Mammary epithelial cell (primary cell): ENCODE measurements at regions of chr2 and their contacts with region 1.

Region 1: DNA sequence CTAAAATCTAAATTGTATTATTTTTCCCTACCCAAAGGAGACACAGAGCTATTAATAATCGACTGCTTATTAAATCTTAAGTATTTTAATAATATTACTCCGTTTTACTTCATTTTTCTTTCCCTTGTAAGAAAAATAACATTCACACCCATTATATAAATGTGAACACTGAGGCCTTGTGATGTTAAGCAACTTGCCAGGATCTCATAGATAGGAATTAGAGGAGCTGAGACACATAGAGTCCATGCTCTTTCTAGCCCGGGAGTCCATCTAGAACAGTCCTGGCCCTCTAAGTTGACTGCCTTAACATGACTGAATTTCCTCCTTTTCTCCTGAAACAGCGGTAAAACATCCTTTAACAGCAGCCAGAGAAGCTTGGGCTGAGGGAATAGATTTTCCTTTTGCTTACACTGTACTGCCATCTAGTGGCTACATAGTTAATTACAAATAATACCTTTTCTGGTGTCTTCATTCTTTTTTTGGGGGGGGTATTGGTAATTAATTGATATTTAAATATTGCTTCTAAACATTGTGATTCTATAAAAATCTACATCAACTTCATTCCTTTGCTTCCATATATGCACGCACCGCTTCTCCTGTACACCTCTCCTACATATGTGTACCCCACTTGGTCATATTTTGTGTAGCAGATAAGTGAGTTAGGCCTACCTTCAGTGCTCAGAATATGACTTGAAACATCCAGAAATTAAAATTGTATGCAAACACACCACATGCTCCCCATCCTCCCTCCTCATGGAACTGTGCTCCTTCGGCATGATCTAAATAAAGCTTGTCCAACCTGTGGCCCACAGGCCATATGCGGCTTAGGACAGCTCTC is 125.8 kb upstream of the HNMT start:
- DNase-seq: peak; percentile 29
- H3K4me3 ChIP-seq: no peak overlapping the region
- H3K27ac ChIP-seq: no peak overlapping the region
- H3K4me1 ChIP-seq: no peaks in the 10 kb centered on the region
- H3K27me3 ChIP-seq: no peaks in the 10 kb centered on the region
- CTCF ChIP-seq: peak; percentile 53 to 55

Region 2: DNA sequence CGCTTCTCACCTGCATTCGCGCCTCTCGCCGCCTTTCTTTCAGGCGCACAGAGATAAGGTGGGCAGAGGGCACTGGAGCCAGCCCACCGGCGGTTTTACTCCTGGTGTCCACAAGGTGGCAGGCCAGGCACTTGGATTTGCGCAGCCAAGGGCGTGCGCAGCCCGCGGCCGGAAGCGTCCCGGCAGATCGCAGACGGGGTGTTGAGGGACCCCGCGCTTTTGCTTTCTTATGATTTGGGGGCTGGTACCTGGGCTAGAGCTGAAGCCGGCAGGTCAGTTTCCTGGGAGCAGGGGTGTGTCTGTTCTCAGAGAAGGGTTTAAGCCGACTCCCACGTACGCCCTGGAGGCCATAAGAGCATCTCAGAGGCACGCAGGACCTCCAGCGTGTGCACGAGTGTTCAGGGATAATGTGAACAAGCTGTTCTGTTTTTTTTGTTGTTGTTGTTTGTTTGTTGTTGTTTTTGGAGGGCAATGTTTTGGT is 1414.9 kb before region 1 on chr2:
- CTCF ChIA-PET with region 1: no interaction called
- dilution Hi-C with region 1: no loop called
- in situ Hi-C with region 1: loop called (anchors 25 kb)
- intact Hi-C with region 1: loop called (anchors 1 kb)
- DNase-seq: peak; percentile 45
- H3K4me3 ChIP-seq: peak overlapping the region; percentile 34 to 46 (median 41)
- H3K27ac ChIP-seq: no peak overlapping the region
- H3K4me1 ChIP-seq: no peaks in the 10 kb centered on the region
- H3K27me3 ChIP-seq: peaks cover 3% of the 10 kb centered on the region
- CTCF ChIP-seq: peak; percentile 74 to 87

Region 3: GRCh38 chr2:136874258-136874657 is 964.2 kb before region 1 on chr2:
- CTCF ChIA-PET with region 1: no interaction called
- dilution Hi-C with region 1: no loop called
- in situ Hi-C with region 1: no loop called
- intact Hi-C with region 1: loop called (anchors 1 kb)
- DNase-seq: no peak
- H3K4me3 ChIP-seq: no peak overlapping the region
- H3K27ac ChIP-seq: no peak overlapping the region
- H3K4me1 ChIP-seq: no peaks in the 10 kb centered on the region
- H3K27me3 ChIP-seq: no peaks in the 10 kb centered on the region
- CTCF ChIP-seq: peak; percentile 35 to 54

Region 4: GRCh38 chr2:136932700-136933099 is 905.8 kb before region 1 on chr2:
- CTCF ChIA-PET with region 1: interaction called, 4 read pairs
- dilution Hi-C with region 1: no loop called
- in situ Hi-C with region 1: no loop called
- intact Hi-C with region 1: loop called (anchors 1 kb)
- DNase-seq: peak; percentile 14
- H3K4me3 ChIP-seq: no peak overlapping the region
- H3K27ac ChIP-seq: no peak overlapping the region
- H3K4me1 ChIP-seq: no peaks in the 10 kb centered on the region
- H3K27me3 ChIP-seq: no peaks in the 10 kb centered on the region
- CTCF ChIP-seq: peak; percentile 63 to 82

Region 5: DNA sequence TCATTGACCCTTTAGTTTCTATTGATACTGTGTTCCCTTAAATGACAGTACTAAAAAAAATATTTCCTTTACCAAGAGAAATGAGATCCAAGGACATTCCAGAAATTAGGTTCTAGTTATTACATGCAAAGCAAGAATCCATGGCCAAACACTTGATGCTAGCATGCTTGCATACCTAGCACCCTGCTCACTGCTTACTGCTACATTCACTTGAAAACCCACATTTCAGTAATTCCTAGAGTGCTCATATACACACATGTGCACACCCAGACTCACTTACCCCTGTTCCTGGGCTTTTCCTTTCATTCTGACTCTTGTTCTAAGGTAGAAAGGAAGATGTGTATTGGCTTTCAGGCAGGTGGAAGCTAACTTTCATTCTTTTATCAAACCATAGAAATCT is 677.2 kb before region 1 on chr2:
- CTCF ChIA-PET with region 1: no interaction called
- dilution Hi-C with region 1: no loop called
- in situ Hi-C with region 1: no loop called
- intact Hi-C with region 1: loop called (anchors 5 kb)
- DNase-seq: no peak
- H3K4me3 ChIP-seq: no peak overlapping the region
- H3K27ac ChIP-seq: no peak overlapping the region
- H3K4me1 ChIP-seq: peaks cover 7% of the 10 kb centered on the region
- H3K27me3 ChIP-seq: no peaks in the 10 kb centered on the region
- CTCF ChIP-seq: no peak

Region 6: DNA sequence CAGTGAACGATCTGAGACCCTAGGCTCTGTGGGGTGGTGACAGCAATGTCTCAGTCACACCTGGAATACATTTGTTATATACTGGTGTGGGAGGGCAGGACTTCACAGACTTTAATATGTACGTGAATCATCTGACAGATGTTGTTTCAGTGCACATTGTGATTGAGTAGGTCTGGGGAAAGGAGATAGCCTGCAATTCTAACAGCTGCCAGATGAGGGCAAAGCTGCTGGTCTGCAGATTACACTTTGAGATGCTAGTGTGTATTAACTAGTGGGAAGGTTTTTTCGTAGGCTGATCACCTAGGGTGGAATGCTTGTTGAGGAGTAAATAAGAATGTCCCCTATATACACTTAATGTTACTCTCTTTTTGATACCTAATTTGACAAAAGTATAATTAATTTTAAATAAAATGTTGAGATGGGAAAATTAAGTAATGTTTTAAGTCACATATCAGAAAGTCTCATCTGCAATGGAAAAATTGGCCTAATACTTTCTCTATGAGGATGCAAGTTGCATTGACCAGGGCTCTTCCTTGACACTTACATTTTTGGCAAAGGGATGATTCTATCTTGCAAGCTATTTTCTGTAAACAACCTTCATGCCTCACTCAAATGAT is 371.1 kb before region 1 on chr2:
- CTCF ChIA-PET with region 1: no interaction called
- dilution Hi-C with region 1: no loop called
- in situ Hi-C with region 1: no loop called
- intact Hi-C with region 1: loop called (anchors 1 kb)
- DNase-seq: peak; percentile 48
- H3K4me3 ChIP-seq: no peak overlapping the region
- H3K27ac ChIP-seq: no peak overlapping the region
- H3K4me1 ChIP-seq: no peaks in the 10 kb centered on the region
- H3K27me3 ChIP-seq: peaks cover 2% of the 10 kb centered on the region
- CTCF ChIP-seq: peak; percentile 77 to 87

Region 7: DNA sequence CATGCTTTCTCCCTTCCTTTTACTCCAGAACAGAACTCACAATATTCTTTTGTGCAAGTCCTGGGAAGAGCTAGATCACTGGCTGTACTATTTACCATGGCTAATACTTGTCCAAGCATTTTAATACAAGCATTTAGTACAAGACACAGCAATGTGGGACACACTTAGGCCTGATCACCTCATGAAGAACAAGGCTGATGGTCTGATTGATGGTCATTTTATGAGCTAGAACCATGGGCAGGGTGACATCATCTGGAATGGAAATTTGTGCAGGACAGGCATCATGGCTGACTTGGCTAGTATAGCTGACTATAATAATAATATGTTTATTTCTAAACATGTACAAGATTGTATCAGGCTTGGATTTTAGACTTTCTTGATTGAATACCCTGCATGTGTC is 248.4 kb before region 1 on chr2:
- CTCF ChIA-PET with region 1: no interaction called
- dilution Hi-C with region 1: no loop called
- in situ Hi-C with region 1: no loop called
- intact Hi-C with region 1: no loop called
- DNase-seq: no peak
- H3K4me3 ChIP-seq: no peak overlapping the region
- H3K27ac ChIP-seq: no peak overlapping the region
- H3K4me1 ChIP-seq: no peaks in the 10 kb centered on the region
- H3K27me3 ChIP-seq: no peaks in the 10 kb centered on the region
- CTCF ChIP-seq: no peak

Region 8: GRCh38 chr2:137677463-137677862 is 161.0 kb before region 1 on chr2:
- CTCF ChIA-PET with region 1: no interaction called
- dilution Hi-C with region 1: no loop called
- in situ Hi-C with region 1: no loop called
- intact Hi-C with region 1: loop called (anchors 10 kb)
- DNase-seq: no peak
- H3K4me3 ChIP-seq: no peak overlapping the region
- H3K27ac ChIP-seq: no peak overlapping the region
- H3K4me1 ChIP-seq: no peaks in the 10 kb centered on the region
- H3K27me3 ChIP-seq: no peaks in the 10 kb centered on the region
- CTCF ChIP-seq: peak in 1 of 2 donors; percentile 16

Region 9: GRCh38 chr2:137813176-137813575 is 25.3 kb before region 1 on chr2:
- CTCF ChIA-PET with region 1: no interaction called
- dilution Hi-C with region 1: no loop called
- in situ Hi-C with region 1: no loop called
- intact Hi-C with region 1: no loop called
- DNase-seq: no peak
- H3K4me3 ChIP-seq: no peak overlapping the region
- H3K27ac ChIP-seq: no peak overlapping the region
- H3K4me1 ChIP-seq: no peaks in the 10 kb centered on the region
- H3K27me3 ChIP-seq: no peaks in the 10 kb centered on the region
- CTCF ChIP-seq: no peak

Region 10: DNA sequence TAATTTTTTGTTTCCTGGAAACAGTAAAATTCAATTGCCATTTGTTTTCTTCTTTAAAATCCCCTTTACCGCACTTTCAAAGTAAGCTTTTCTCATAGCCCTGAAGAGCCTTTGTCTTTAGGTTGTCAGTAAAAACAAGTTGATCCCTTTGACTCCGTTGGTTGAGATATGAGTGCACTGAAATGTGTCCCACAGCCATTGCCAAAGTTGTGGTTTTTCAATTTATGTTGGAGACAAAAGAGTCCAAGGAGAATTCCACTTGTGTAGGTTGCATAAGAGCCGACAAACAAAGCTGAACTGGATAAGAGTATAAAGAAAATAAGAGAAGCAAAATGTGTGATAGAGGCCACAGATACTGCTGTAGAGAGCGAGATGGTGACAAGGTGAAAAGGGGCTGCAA is 99.7 kb after region 1 on chr2:
- CTCF ChIA-PET with region 1: no interaction called
- dilution Hi-C with region 1: no loop called
- in situ Hi-C with region 1: no loop called
- intact Hi-C with region 1: no loop called
- DNase-seq: no peak
- H3K4me3 ChIP-seq: no peak overlapping the region
- H3K27ac ChIP-seq: no peak overlapping the region
- H3K4me1 ChIP-seq: no peaks in the 10 kb centered on the region
- H3K27me3 ChIP-seq: no peaks in the 10 kb centered on the region
- CTCF ChIP-seq: no peak